ENCODE measurements at regions of chr3 and their contacts with region 1.

Region 1: GRCh38 chr3:53160660-53161449 is at the start of gene PRKCD:
- DNase-seq: peak; percentile 92
- H3K4me3 Mint-ChIP-seq: peak within 1 kb of the TSS; percentile 87
- H3K27ac Mint-ChIP-seq: peak within 1 kb of the TSS; percentile 90
- H3K4me1 Mint-ChIP-seq: peaks cover 24% of the 10 kb centered on the region
- H3K27me3 Mint-ChIP-seq: peaks cover 36% of the 10 kb centered on the region
- total RNA-seq, gene PRKCD: 28.1 and 28.8 TPM in 2 replicates

Region 2: DNA sequence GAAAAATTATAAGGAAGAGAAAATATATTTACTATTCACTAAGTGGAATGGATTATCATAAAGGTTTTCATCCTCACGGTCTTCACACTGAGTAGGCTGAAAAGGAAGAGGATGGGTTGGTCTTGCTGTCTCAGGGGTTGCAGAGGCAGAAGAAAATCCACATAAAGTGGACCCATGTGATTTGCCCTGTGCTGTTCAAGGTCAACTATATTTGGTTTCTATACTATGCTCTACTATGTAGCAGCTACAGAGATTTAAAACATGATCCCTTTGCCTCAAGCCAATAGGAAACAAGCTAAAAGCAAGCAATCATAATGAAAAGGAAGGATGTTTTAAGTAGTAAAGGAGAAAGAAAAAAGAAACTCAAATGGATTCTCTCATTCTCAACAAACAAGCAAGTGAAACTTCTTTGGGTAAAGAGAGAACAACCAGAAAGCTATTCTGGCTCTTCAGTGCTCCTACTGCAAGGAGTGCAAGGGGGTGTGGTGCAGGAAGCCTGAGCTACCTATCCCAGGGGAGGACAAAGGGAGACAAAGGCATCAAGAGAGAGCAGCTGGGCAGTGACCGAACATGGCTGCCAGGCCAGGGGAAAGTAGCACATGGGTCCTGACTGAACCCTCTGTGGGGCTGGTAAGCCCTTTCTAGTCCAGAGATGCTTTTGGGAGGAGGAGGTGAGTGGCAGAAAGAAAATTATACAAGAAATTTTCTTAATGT is 150.9 kb before region 1 on chr3:
- intact Hi-C with region 1: no loop called
- DNase-seq: no peak
- H3K4me3 Mint-ChIP-seq: no peak overlapping the region
- H3K27ac Mint-ChIP-seq: peak overlapping the region; percentile 9
- H3K4me1 Mint-ChIP-seq: peaks cover 18% of the 10 kb centered on the region
- H3K27me3 Mint-ChIP-seq: no peaks in the 10 kb centered on the region

Region 3: GRCh38 chr3:53130179-53131061 is 30.4 kb before region 1 on chr3 and contains the start of gene RFT1:
- intact Hi-C with region 1: loop called (anchors 1 kb)
- DNase-seq: peak; percentile 100
- H3K4me3 Mint-ChIP-seq: peak within 1 kb of the TSS; percentile 89
- H3K27ac Mint-ChIP-seq: peak within 1 kb of the TSS; percentile 93
- H3K4me1 Mint-ChIP-seq: peaks cover 15% of the 10 kb centered on the region
- H3K27me3 Mint-ChIP-seq: no peaks in the 10 kb centered on the region
- total RNA-seq, gene RFT1: 47.4 and 47.6 TPM in 2 replicates

Region 4: GRCh38 chr3:53140847-53141845 is 19.7 kb before region 1 on chr3:
- intact Hi-C with region 1: no loop called
- DNase-seq: no peak
- H3K4me3 Mint-ChIP-seq: no peak overlapping the region
- H3K27ac Mint-ChIP-seq: no peak overlapping the region
- H3K4me1 Mint-ChIP-seq: peaks cover 3% of the 10 kb centered on the region
- H3K27me3 Mint-ChIP-seq: no peaks in the 10 kb centered on the region

Region 5: DNA sequence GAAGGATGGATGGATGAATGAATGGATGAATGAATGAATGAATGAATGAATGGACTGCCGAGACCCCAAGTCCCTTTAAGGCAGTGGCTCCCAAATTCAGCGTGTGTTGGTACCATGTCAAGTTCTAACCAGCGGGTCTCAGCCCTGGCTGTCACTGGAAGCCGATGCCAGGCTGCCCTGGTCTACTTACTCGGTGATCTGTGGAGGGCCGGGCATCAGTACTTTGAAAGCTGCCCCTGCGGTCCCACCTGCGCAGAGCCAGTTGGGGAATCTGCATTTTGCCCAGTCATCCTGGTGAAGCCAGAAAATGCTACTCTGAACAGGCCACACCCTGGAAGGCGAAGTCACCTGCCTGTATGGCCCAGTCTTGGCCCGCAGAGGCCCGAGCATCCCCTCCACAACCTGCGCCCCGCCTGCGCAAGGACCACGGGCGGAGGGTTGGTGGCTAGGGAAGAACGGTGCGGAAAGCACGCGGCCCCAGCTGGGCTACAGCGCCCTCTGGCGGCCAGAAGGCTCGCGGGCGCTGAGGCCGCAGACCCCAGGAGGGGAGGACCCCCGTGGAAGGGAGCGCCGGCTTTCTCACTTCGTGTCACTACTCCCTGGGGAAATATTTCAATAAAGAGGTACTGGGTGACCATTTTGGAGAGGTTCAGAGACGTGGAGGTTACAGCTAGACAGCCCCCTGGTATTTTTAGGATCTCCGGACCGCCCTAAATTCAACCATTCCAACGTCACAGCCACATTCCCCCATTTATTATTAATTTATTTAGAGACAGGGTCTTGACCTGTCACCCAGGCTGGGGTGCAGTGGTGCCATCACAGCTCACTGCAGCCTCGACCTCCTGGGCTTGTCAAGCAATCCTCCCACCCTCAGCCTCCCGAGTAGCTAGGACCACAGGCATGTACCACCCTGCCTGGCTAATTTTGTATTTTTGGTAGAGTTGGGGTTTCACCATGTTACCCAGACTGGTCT is 35.0 kb after region 1 on chr3:
- intact Hi-C with region 1: loop called (anchors 2 kb)
- DNase-seq: peak; percentile 89
- H3K4me3 Mint-ChIP-seq: no peak overlapping the region
- H3K27ac Mint-ChIP-seq: peak overlapping the region; percentile 30
- H3K4me1 Mint-ChIP-seq: peaks cover 6% of the 10 kb centered on the region
- H3K27me3 Mint-ChIP-seq: no peaks in the 10 kb centered on the region

Region 6: GRCh38 chr3:53255775-53256703 is 95.2 kb after region 1 on chr3 and contains the start of gene TKT:
- intact Hi-C with region 1: loop called (anchors 1 kb)
- DNase-seq: peak; percentile 95
- H3K4me3 Mint-ChIP-seq: peak within 1 kb of the TSS; percentile 98
- H3K27ac Mint-ChIP-seq: peak within 1 kb of the TSS; percentile 93
- H3K4me1 Mint-ChIP-seq: peaks cover 30% of the 10 kb centered on the region
- H3K27me3 Mint-ChIP-seq: peaks cover 2% of the 10 kb centered on the region
- total RNA-seq, gene TKT: 377 and 379 TPM in 2 replicates